HCT116 (cell line): ENCODE measurements at regions of chr22 and their contacts with region 1.

Region 1: DNA sequence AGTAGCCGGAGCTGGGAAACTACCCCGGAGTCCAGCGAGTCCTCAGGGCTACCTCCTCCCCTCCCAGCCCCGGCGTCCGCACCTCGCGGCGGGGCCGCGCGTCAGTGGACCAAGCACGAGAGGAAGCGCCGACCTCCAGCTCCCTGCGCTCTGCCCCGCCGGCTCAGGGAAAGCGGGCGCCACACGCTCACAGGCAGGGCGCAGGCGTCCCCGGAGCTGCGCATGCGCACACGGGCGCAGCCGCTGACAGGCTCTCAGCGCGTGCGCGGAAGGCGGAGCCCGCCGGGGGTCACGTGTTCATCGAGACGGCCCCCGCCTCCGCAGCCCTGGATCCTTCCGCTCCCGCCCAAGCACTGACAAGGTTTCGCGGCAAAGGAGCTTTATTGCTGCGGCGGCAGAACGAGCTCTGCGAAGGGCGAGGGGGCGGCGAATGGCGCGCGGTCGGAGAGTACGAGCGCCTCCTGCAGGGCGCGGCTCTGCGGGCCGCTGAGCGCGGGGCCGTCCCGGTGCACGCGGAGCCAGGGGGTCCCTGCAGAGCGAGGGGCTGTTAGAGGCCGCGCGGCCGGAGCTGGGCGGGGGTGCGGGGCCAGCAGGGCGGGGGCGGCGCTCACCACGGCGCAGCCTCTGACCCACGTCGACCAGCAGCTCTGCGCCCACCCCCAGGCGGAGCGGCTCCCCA is at the start of gene SCO2:
- DNase-seq: peak; percentile 93
- ATAC-seq: peak; percentile 57
- H3K4me3 ChIP-seq: peak within 1 kb of the TSS; percentile 78 to 85
- H3K27ac ChIP-seq: peak within 1 kb of the TSS; percentile 100
- H3K4me1 ChIP-seq: peaks cover 13 to 64% of the 10 kb centered on the region in 2 experiments; a peak in 3 of 4 replicates
- H3K27me3 ChIP-seq: no peaks in the 10 kb centered on the region
- CTCF ChIP-seq: peak in 2 of 3 experiments; percentile 47 to 55; a peak in 4 of 6 replicates
- POLR2A ChIP-seq: peak; percentile 79
- RAD21 ChIP-seq: no peak
- total RNA-seq, gene SCO2: 7.0 TPM

Region 2: GRCh38 chr22:50444663-50445062 is 80.9 kb before region 1 on chr22:
- CTCF ChIA-PET with region 1: no interaction called
- POLR2A ChIA-PET with region 1: no interaction called
- RAD21 ChIA-PET with region 1: no interaction called
- intact Hi-C with region 1: no loop called
- DNase-seq: peak; percentile 6
- ATAC-seq: no peak
- H3K4me3 ChIP-seq: no peak overlapping the region
- H3K27ac ChIP-seq: no peak overlapping the region
- H3K4me1 ChIP-seq: peaks cover 0 to 4% of the 10 kb centered on the region in 2 experiments; a peak in 2 of 4 replicates
- H3K27me3 ChIP-seq: no peaks in the 10 kb centered on the region
- CTCF ChIP-seq: no peak
- POLR2A ChIP-seq: no peak
- RAD21 ChIP-seq: no peak

Region 3: DNA sequence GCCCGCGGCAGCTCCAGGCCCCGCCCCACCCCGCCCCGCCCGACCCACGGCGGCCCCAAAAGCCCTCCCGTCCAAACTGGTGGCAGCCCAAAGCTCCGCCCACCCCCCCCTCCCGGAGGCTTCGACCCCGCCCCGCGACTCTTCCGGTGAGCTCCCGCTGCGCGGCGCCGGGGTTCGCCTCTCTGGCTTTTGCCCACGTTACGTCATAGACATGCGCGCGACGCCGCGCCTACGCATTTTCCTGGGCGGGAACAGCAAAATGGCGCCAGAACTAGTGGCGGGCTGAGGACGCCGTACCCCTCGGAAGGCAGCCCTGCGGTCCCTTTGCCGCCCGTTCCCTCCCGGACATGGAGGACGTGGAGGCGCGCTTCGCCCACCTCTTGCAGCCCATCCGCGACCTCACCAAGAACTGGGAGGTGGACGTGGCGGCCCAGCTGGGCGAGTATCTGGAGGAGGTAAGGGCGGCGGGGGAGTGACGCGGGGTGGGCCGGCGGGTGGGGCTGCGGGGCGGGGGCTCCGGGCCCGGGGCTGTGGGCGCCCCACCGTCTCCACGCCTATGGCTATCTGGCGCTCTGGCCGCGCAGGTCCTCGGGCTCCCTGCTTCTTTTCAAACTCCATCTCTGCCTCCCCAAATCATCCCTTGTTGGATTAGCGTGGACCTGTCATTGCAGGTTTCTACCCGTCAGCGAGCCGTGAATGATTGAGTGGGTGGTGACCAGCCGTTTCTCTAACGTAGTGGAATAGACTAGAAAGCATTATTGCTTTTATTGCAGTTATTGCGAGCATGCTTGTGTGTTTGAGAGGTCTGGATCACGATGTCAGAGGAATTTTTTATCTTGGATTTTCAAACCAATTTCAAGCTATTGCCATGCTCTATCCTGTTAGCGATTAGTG is 17.3 kb before region 1 on chr22 and contains the start of gene NCAPH2:
- CTCF ChIA-PET with region 1: interaction called, 21 read pairs
- POLR2A ChIA-PET with region 1: interaction called, 20 read pairs
- RAD21 ChIA-PET with region 1: interaction called, 4 to 8 read pairs
- intact Hi-C with region 1: loop called (anchors 1 kb)
- DNase-seq: peak; percentile 94
- ATAC-seq: peak; percentile 70
- H3K4me3 ChIP-seq: peak within 1 kb of the TSS; percentile 67 to 99
- H3K27ac ChIP-seq: peak within 1 kb of the TSS; percentile 84
- H3K4me1 ChIP-seq: peaks cover 10 to 17% of the 10 kb centered on the region in 2 experiments
- H3K27me3 ChIP-seq: no peaks in the 10 kb centered on the region
- CTCF ChIP-seq: no peak
- POLR2A ChIP-seq: peak; percentile 44
- RAD21 ChIP-seq: no peak
- total RNA-seq, gene NCAPH2: 99.1 TPM

Region 4: DNA sequence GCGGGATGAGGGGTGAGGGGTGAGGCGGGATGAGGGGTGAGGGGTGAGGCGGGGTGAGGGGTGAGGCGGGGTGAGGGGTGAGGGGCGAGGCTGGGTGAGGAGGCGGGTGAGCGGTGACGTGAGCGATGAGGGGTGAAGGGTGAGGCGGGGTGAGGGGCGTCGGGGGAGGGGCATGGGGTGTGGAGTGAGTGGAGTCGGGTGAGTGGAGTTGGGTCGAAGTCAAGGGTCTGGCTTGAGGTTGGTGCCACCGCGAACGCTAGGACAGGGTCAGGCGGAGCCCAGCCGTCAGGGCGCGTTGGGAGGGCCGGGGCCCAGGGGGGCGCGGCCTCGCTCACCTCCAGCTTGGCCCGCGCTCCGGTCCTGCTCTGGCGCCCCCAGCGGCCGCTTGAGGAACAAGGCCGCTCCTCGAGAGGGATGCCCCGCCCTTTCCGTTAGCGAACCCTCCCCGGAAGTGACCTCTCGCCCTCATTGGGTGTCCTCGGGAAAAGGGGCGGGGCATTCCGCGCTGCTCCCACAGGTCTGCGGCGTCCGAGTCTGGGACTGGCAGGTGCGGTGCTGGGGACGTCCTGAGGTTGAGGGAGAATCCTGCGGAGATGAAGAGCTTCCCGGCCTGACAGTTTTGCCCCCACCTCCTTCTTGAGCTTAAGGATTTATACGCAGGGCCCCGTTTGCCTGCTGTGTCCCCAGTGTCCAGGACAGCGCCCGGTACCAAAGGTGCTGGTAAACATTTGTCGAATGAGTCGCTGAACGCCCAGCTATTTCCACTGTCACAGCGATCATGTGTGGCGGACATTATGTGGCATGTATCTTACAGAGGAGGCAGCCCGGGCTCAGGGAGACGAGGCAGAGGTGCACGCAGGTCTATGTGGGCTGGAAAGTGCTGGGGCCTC is 37.2 kb after region 1 on chr22 and contains the start of gene SYCE3:
- CTCF ChIA-PET with region 1: interaction called, 11 read pairs
- POLR2A ChIA-PET with region 1: interaction called, 8 read pairs
- RAD21 ChIA-PET with region 1: interaction called, 3 to 5 read pairs
- intact Hi-C with region 1: no loop called
- DNase-seq: peak; percentile 89
- ATAC-seq: peak; percentile 97
- H3K4me3 ChIP-seq: peak within 1 kb of the TSS; percentile 70
- H3K27ac ChIP-seq: peak within 1 kb of the TSS; percentile 43; the same call in 1 of the 2 replicates
- H3K4me1 ChIP-seq: peaks cover 6 to 11% of the 10 kb centered on the region in 2 experiments; a peak in 2 of 4 replicates
- H3K27me3 ChIP-seq: no peaks in the 10 kb centered on the region
- CTCF ChIP-seq: peak; percentile 52 to 92 (median 79)
- POLR2A ChIP-seq: no peak
- RAD21 ChIP-seq: peak; percentile 59
- total RNA-seq, gene SYCE3: not detected